CD8-positive, alpha-beta T cell (primary cell): ENCODE measurements at regions of chr22 and their contacts with region 1.

Region 1: DNA sequence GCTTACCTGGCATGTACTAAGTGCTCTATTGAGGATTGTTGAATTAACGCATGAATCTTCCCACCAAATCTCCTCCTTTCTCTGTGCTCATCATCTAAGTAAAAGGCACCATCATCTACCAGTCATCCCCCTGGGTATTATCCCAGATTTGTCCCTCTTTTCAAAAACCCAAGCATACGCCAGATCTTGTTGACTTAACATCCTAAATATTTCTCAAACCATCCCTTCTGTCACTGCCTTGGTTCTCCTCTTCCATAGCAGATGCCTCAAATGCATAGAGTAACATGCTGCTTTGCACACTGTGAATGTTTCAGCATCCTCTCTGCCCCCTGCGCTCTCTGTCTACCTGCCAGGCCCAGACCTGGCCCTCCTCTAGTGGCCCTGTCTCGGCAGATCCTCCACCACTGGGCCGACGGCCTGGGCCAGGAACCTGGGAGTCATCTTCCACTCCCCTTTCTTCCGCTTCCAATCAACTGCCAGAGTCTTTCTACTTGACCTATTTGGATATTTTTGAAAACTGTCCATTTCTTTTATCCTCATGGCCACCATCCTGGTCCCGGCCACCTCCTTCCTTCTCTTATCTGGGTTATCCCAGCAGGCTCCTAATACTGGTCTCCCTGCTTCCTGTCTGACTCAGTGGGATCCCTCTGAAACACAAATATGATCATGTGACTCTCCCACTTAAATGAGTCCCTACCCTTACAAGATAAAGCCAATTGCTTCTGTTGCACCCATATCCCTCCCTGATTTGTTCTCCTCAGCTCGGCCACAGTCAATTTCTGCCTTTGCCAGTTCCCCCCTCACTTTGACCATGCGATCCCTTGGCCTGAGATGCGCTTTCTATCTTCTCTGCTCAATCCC is 3.4 kb upstream of the TAB1 start:
- DNase-seq: no peak
- ATAC-seq: no peak
- H3K4me3 ChIP-seq: no peak overlapping the region
- H3K4me3 Mint-ChIP-seq: no peak overlapping the region
- H3K27ac ChIP-seq: no peak overlapping the region
- H3K27ac Mint-ChIP-seq: no peak overlapping the region
- H3K4me1 ChIP-seq: peaks cover 10% of the 10 kb centered on the region
- H3K4me1 Mint-ChIP-seq: peaks cover 9% of the 10 kb centered on the region
- H3K27me3 ChIP-seq: no peaks in the 10 kb centered on the region
- H3K27me3 Mint-ChIP-seq: no peaks in the 10 kb centered on the region
- CTCF ChIP-seq: no peak

Region 2: DNA sequence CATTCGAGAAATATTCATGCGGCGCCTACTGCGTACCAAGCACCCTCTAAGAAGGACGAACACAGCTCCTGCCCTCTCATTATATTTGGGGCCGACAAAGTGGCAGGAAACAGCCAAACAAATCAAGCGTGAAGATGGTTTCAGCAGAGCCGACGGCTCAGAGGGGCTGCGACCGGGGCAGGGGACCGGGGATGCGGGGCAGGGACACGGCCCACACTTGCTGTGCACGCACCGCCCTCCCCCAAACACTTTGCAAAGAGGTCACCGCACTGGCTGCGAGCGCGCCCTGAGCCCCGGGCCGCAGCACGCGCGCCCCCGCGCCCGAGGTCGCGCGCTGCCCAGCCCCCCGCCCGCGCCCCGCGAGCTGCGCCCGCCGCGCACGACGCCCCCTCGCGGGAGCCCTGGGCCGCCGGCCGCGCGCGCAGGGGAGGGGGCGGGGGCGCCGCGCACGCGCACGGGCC is 46.6 kb before region 1 on chr22:
- CTCF ChIA-PET with region 1: no interaction called
- POLR2A ChIA-PET with region 1: interaction called, 3 read pairs
- intact Hi-C with region 1: loop called in 1 of 2 experiments (anchors 1 kb)
- DNase-seq: peak in 5 of 9 experiments; percentile 16 to 75 (median 59)
- ATAC-seq: peak; percentile 59
- H3K4me3 ChIP-seq: peak overlapping the region; percentile 63 to 64
- H3K4me3 Mint-ChIP-seq: peak overlapping the region; percentile 89
- H3K27ac ChIP-seq: peak overlapping the region; percentile 51 to 69
- H3K27ac Mint-ChIP-seq: peak overlapping the region; percentile 83
- H3K4me1 ChIP-seq: peaks cover 33% of the 10 kb centered on the region
- H3K4me1 Mint-ChIP-seq: peaks cover 18% of the 10 kb centered on the region
- H3K27me3 ChIP-seq: peaks cover 0 to 5% of the 10 kb centered on the region in 2 experiments
- H3K27me3 Mint-ChIP-seq: peaks cover 2% of the 10 kb centered on the region
- CTCF ChIP-seq: no peak

Region 3: DNA sequence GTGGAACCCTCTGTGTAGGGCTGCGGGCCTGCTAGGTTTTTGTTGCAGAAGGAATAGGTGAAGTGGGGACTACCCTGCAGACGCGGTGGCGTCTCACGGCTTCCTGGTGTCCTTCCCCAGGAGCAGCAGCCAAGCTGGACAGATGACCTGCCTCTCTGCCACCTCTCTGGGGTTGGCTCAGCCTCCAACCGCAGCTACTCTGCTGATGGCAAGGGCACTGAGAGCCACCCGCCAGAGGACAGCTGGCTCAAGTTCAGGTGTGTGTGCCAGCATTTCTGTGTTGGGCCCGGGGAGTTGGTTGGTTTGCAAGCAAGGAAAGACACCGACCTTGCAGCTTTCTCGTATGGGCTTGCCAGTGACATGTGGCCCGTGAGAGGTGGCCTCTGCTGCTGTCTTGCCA is 18.7 kb after region 1 on chr22:
- CTCF ChIA-PET with region 1: interaction called, 5 read pairs
- POLR2A ChIA-PET with region 1: interaction called, 20 read pairs
- intact Hi-C with region 1: loop called (anchors 1 kb)
- DNase-seq: no peak
- ATAC-seq: no peak
- H3K4me3 ChIP-seq: peak overlapping the region; percentile 0 to 17
- H3K4me3 Mint-ChIP-seq: peak overlapping the region; percentile 63
- H3K27ac ChIP-seq: no peak overlapping the region
- H3K27ac Mint-ChIP-seq: peak overlapping the region; percentile 75
- H3K4me1 ChIP-seq: peaks cover 68% of the 10 kb centered on the region
- H3K4me1 Mint-ChIP-seq: peaks cover 62% of the 10 kb centered on the region
- H3K27me3 ChIP-seq: no peaks in the 10 kb centered on the region
- H3K27me3 Mint-ChIP-seq: no peaks in the 10 kb centered on the region
- CTCF ChIP-seq: no peak

Region 4: GRCh38 chr22:39439170-39439569 is 43.0 kb after region 1 on chr22:
- CTCF ChIA-PET with region 1: interaction called, 5 read pairs
- POLR2A ChIA-PET with region 1: interaction called, 5 read pairs
- intact Hi-C with region 1: loop called in 1 of 2 experiments (anchors 2 kb)
- DNase-seq: no peak
- ATAC-seq: no peak
- H3K4me3 ChIP-seq: no peak overlapping the region
- H3K4me3 Mint-ChIP-seq: no peak overlapping the region
- H3K27ac ChIP-seq: no peak overlapping the region
- H3K27ac Mint-ChIP-seq: no peak overlapping the region
- H3K4me1 ChIP-seq: peaks cover 17% of the 10 kb centered on the region
- H3K4me1 Mint-ChIP-seq: peaks cover 16% of the 10 kb centered on the region
- H3K27me3 ChIP-seq: peaks cover 0 to 3% of the 10 kb centered on the region in 2 experiments
- H3K27me3 Mint-ChIP-seq: peaks cover 15% of the 10 kb centered on the region
- CTCF ChIP-seq: no peak

Region 5: DNA sequence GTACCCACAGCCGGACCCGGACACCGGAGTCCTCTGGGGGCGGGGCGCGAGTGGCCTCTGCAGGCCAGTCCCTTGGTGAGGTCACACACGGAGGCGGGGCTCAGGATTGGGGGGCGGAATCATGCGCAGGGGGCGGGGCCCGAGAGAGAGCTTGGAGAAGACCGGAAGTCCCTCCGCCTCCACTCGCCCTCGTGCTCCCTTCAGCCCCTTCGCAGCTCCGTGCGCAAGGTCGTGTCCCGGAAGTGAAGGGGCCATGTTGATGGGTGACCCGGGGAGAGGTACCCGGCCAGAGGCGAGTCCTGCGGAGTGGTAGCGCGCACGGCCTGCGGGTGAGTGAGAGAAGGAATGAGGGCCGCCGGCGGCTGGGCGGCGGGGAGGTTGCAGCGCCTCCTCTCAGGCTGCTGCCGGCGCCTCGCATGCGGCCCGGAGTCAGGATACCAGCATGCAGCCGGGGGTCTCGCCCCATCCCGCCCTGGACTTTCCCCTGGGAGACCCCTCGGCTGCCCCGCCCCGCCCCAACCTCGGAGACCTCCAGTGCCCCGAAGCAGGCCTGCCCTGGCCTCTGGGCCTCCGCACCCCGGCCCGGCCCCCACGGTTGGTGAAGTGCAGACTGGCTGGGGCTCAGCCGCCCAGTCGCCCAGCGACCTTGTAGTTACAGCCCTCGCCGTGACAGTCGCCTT is 106.1 kb after region 1 on chr22 and contains the start of gene MIEF1:
- CTCF ChIA-PET with region 1: interaction called, 5 read pairs
- POLR2A ChIA-PET with region 1: interaction called, 5 read pairs
- intact Hi-C with region 1: loop called in 1 of 2 experiments (anchors 1 kb)
- DNase-seq: peak; percentile 67 to 96 (median 88)
- ATAC-seq: peak; percentile 94
- H3K4me3 ChIP-seq: peak within 1 kb of the TSS; percentile 66 to 80
- H3K4me3 Mint-ChIP-seq: peak within 1 kb of the TSS; percentile 97
- H3K27ac ChIP-seq: peak within 1 kb of the TSS; percentile 64 to 80
- H3K27ac Mint-ChIP-seq: peak within 1 kb of the TSS; percentile 92
- H3K4me1 ChIP-seq: peaks cover 30% of the 10 kb centered on the region
- H3K4me1 Mint-ChIP-seq: peaks cover 41% of the 10 kb centered on the region
- H3K27me3 ChIP-seq: no peaks in the 10 kb centered on the region
- H3K27me3 Mint-ChIP-seq: no peaks in the 10 kb centered on the region
- CTCF ChIP-seq: no peak
- total RNA-seq, gene MIEF1: 24.8 to 25.3 TPM

Region 6: DNA sequence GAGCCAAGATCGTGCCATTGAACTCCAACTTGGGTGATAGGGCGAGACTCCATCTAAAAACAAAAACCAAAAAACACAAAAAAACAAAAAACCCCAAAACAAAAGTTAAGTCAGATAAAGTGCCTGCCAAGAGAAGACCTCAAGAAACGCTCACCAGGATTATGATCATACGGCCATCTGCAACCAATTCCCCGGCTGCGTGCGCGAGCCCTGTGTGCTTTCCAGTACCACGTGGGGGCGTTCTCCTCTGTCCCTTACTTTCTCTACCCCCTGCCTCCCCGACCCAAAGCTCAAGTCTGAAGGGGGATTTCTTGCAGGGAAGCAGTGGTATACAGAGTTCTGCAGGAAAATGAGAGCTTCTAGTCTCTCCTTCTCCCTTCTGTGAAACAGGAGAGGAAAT is 146.9 kb after region 1 on chr22:
- CTCF ChIA-PET with region 1: no interaction called
- POLR2A ChIA-PET with region 1: no interaction called
- intact Hi-C with region 1: no loop called
- DNase-seq: peak in 2 of 9 experiments; percentile 38 to 50
- ATAC-seq: peak; percentile 51
- H3K4me3 ChIP-seq: no peak overlapping the region
- H3K4me3 Mint-ChIP-seq: no peak overlapping the region
- H3K27ac ChIP-seq: no peak overlapping the region
- H3K27ac Mint-ChIP-seq: no peak overlapping the region
- H3K4me1 ChIP-seq: peaks cover 13% of the 10 kb centered on the region
- H3K4me1 Mint-ChIP-seq: peaks cover 14% of the 10 kb centered on the region
- H3K27me3 ChIP-seq: peaks cover 3% of the 10 kb centered on the region in 2 experiments
- H3K27me3 Mint-ChIP-seq: peaks cover 33% of the 10 kb centered on the region
- CTCF ChIP-seq: no peak